ENCODE measurements at regions of chr6 and their contacts with region 1.

Region 1: GRCh38 chr6:127554435-127555006 is 22.5 kb upstream of the C6orf58 start:
- DNase-seq: peak; percentile 62
- ATAC-seq: peak; percentile 77
- H3K4me3 ChIP-seq: no peak overlapping the region
- H3K27ac ChIP-seq: no peak overlapping the region
- H3K4me1 ChIP-seq: no peaks in the 10 kb centered on the region
- H3K27me3 ChIP-seq: no peaks in the 10 kb centered on the region
- CTCF ChIP-seq: peak; percentile 72

Region 2: DNA sequence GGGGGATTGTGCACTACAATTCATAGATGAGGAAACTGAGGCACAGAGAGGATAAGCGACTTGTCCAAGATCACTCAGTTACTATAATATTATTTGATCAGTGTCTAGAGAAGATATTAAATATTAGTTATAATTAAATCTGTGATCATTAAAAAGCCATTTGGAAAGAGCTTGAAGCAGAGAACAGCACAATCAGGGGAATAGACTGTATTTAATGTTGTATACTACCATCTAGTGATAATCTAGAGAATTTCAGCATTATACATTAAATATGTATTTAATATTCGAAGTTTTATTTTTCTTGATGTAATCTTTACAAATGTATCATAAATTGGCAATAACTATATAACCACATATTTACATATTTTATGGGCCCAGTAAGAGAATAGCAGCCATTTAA is 15.2 kb before region 1 on chr6:
- CTCF ChIA-PET with region 1: no interaction called
- POLR2A ChIA-PET with region 1: no interaction called
- intact Hi-C with region 1: no loop called
- DNase-seq: peak; percentile 34
- ATAC-seq: peak; percentile 35
- H3K4me3 ChIP-seq: no peak overlapping the region
- H3K27ac ChIP-seq: no peak overlapping the region
- H3K4me1 ChIP-seq: no peaks in the 10 kb centered on the region
- H3K27me3 ChIP-seq: no peaks in the 10 kb centered on the region
- CTCF ChIP-seq: peak; percentile 52; the same call in 1 of the 2 replicates

Region 3: GRCh38 chr6:127606131-127606562 is 51.6 kb after region 1 on chr6:
- CTCF ChIA-PET with region 1: interaction called, 4 read pairs
- POLR2A ChIA-PET with region 1: no interaction called
- intact Hi-C with region 1: loop called (anchors 2 kb)
- DNase-seq: peak; percentile 61
- ATAC-seq: peak; percentile 65
- H3K4me3 ChIP-seq: no peak overlapping the region
- H3K27ac ChIP-seq: no peak overlapping the region
- H3K4me1 ChIP-seq: peaks cover 7% of the 10 kb centered on the region
- H3K27me3 ChIP-seq: no peaks in the 10 kb centered on the region
- CTCF ChIP-seq: peak; percentile 64

Region 4: GRCh38 chr6:127641905-127642304 is 87.4 kb after region 1 on chr6:
- CTCF ChIA-PET with region 1: no interaction called
- POLR2A ChIA-PET with region 1: no interaction called
- intact Hi-C with region 1: loop called (anchors 1 kb)
- DNase-seq: peak; percentile 64
- ATAC-seq: peak; percentile 70
- H3K4me3 ChIP-seq: no peak overlapping the region
- H3K27ac ChIP-seq: no peak overlapping the region
- H3K4me1 ChIP-seq: no peaks in the 10 kb centered on the region
- H3K27me3 ChIP-seq: no peaks in the 10 kb centered on the region
- CTCF ChIP-seq: peak; percentile 62

Measured in PC-3 (cell line).